Motor neuron (in vitro differentiated cells): ENCODE measurements at regions of chr3 and their contacts with region 1.

Region 1: GRCh38 chr3:194333212-194333980 is 17.7 kb downstream of the CPN2 start:
- ATAC-seq: peak; percentile 95 to 99 (median 98)
- H3K4me3 ChIP-seq: peak overlapping the region; percentile 27 to 41 (median 32)
- H3K27ac ChIP-seq: no peak overlapping the region
- H3K4me1 ChIP-seq: peaks cover 0 to 8% of the 10 kb centered on the region in 2 donors

Region 2: DNA sequence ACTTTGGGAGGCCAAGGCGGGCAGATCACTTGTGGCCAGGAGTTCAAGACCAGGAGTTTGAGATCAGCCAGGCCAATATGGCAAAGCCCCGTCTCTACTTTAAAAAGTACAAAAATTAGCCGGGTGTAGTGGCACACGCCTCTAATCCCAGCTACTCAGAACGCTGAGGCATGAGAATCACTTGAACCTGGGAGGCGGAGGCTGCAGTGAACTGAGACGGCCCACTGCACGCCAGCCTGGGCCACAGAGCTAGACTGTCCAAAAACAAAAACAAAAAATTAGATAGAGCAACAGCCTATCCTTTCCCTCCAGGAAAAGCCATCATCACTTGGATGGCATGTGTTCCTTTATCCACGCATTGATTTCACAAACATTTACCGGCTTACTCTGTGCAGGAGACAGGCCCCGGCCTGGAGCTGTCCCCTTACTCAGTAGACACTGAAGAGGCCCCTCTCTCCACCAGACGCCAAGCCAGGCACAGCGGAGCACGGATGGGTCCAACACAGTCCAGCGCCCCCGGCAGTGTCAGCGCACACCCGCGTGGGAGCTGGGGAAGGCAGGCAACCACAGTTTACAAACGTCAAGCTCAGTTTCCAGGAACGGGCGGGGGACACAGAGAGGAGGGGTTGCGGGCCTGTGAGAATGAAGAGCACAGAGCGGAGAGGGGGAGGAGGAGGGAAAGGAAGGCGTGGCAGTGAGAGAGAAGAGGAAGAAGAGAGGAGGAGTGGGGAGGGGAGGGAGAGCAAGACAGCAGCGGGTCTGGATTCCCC is 62.6 kb after region 1 on chr3:
- in situ Hi-C with region 1: loop called in 4 of 9 experiments (anchors 10 kb)
- ATAC-seq: peak; percentile 66 to 87 (median 73)
- H3K4me3 ChIP-seq: no peak overlapping the region
- H3K27ac ChIP-seq: peak overlapping the region; percentile 47 to 72
- H3K4me1 ChIP-seq: peaks cover 22 to 29% of the 10 kb centered on the region in 2 donors

Region 3: DNA sequence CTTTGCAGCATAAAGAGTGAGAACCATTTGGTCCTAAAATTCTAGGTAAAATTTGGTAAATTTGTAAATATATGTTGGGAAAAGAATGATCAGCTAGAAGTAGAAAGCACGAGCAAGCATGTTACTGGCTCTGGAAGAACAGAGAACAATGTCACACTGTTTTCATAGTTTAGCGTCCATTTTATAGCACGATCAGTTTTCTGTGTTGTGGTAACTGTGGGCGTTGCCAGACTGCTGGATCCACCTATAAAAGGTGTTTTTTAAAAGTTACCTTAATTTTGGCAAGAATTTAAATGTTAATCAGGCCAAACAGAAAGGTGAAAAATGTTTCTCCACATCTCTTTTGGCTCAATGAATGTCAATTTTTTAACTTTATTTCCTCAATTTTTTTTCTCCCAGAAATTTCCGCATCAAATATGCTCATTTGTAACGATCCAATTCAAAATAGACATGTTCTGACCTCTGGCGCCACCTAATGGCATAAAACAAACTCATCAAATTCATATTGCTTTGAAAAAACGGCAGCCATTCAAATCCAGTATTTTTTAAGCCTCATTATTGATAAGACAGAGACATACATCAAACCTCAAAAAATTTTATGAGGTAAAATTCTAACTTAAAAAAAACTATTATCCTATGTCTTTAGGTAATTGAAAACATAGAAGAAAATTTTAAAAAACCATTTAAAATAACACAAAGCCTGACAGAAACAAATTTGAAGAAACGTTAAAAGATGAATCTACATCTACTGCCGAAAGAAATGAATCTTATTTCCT is 71.2 kb after region 1 on chr3:
- in situ Hi-C with region 1: loop called in 5 of 9 experiments (anchors 5 to 10 kb)
- ATAC-seq: peak in 2 of 8 experiments; percentile 31 to 38
- H3K4me3 ChIP-seq: no peak overlapping the region
- H3K27ac ChIP-seq: no peak overlapping the region
- H3K4me1 ChIP-seq: peaks cover 8 to 11% of the 10 kb centered on the region in 2 donors

Region 4: DNA sequence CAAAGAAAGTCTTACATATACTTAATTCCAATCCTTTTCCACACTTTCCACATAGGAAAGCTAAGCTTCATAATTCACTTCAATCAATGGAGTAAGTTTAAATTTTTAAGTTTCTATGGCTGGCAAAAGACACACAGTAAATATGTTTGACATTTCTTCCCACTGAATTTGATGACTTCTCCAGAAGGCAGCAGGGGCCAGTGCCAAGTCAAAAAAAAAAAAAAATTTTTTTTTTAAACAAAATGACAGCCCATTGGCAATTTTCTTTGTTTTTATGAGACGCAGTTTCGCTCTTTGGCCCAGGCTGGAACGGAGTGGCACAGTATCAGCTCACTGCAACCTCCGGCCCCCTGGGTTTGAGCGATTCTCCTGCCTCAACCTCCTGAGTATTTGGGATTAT is 124.7 kb after region 1 on chr3:
- in situ Hi-C with region 1: no loop called
- ATAC-seq: no peak
- H3K4me3 ChIP-seq: no peak overlapping the region
- H3K27ac ChIP-seq: no peak overlapping the region
- H3K4me1 ChIP-seq: no peaks in the 10 kb centered on the region

Region 5: GRCh38 chr3:194573691-194574437 is 240.5 kb after region 1 on chr3:
- in situ Hi-C with region 1: loop called in 5 of 9 experiments (anchors 10 to 25 kb)
- ATAC-seq: peak in 5 of 8 experiments; percentile 9 to 82 (median 29)
- H3K4me3 ChIP-seq: no peak overlapping the region
- H3K27ac ChIP-seq: no peak overlapping the region
- H3K4me1 ChIP-seq: peaks cover 8 to 24% of the 10 kb centered on the region in 2 donors

Region 6: DNA sequence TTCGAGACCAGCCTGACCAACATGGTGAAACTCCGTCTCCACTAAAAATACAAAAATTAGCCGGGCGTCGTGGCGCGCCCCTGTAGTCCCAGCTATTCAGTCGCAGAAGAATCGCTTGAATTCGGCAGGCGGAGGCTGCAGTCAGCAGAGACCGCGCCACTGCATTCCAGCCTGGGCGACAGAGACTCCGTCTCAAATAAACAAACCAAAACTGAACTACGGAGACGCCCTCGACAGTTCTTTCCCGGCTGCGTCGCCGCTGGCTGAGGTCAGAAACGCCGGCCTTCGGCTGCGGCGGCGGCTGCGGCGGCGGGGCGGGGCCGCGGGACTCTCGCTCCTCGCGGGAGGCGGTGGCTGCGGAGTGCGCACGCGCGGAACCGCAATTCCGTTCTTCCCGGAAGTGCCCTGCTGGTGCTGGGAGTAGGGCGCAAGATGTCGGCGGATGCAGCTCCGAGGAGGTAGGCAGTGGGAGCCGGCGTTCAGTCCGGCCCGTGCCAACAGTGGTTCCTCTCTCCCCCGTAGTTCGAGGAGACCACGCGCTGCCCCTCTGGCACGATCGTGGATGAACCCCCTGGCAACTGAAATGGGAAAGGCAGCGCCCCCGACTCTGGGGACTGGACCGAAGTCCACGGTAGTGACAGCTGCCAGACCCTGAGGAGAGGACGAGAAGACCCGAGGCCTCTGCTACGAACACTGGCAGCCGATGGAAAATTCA is 250.4 kb after region 1 on chr3:
- in situ Hi-C with region 1: loop called in 5 of 9 experiments (anchors 10 to 25 kb)
- ATAC-seq: peak; percentile 89 to 98 (median 96)
- H3K4me3 ChIP-seq: peak overlapping the region; percentile 75 to 95 (median 95)
- H3K27ac ChIP-seq: peak overlapping the region; percentile 86 to 93
- H3K4me1 ChIP-seq: peaks cover 4 to 8% of the 10 kb centered on the region in 2 donors

Region 7: DNA sequence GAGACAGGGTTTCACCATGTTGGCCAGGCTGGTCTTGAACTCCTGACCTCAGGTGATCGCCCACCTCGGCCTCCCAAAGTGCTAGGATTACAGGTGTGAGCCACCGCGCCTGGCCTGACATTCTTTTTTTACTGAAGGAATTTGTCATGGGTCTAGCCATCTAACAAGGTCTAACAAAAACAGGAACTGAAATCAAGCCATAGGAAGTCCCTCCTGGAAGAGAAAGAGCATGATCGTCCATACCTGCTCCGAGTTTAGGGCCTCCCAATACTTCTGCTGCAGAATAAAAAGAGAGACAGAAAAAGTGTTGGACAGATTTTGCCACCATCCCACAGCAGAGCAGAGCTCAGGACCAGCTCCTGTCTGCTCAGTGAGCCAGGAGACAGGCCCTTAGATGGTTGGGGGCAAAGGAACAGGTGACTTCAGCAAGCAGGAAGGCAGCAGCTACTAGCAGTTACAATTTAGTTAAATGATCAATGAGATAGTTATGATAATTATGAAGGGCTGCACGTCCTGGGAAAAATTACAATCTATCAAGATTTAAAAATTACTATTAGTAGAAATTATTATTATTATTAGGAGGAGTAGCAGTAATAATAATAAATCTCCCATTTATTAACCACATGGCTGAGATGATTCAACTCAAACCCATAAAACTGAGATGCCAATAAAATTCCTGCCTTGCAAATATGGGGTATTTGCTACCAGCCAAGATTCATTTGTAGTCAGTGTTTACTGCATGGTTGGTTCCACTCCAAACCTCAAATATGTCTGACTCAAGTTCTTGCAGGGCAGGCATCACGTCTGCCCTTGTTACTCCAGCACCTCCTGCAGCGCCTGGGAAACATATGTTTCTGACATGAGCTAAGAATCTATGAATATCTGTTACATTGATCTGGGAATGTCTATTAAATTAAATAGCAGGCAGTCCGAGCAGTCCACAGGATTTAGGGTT is 259.7 kb after region 1 on chr3:
- in situ Hi-C with region 1: loop called in 5 of 9 experiments (anchors 10 to 25 kb)
- ATAC-seq: peak in 5 of 8 experiments; percentile 62 to 98 (median 96)
- H3K4me3 ChIP-seq: no peak overlapping the region
- H3K27ac ChIP-seq: no peak overlapping the region
- H3K4me1 ChIP-seq: no peaks in the 10 kb centered on the region